ENCODE measurements at regions of chr2 and their contacts with region 1.

Region 1: GRCh38 chr2:234211797-234212196 is 161.3 kb downstream of the SPP2 start:
- DNase-seq: no peak
- CTCF ChIP-seq: no peak

Region 2: DNA sequence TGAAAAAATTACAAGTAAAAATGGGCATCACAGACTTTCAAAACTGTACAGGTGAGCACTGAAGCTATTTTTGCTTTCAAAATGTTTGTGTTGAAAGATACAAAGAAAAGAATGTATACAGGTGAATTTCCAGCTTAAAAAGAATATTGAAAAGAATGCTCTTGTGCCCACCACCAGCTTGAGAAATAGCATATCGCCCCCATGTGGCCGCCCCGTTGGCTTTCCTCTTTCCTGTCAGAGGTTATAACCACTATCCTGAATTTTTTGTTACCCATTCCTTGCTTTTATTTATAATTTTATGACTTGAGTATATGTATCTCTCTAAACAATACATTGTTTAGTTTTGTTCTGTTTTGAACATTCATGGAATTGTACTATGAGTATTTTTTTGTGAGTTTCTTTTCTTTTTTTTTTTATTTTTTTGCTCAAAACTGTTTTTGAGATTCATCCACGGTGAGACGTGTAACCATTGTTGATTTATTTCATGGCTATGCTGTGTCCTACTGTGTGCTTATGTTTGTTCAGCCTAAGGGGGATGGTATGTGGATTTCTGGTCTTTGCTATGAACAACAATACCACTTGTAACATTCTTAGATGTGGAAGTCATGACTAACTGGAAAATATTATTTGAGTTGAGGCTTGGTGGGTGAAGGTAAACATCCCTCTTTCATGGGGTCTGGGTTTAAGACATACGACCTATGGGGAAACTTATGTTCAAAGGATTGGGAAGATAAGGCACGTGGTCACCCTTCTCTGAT is 283.0 kb before region 1 on chr2:
- CTCF ChIA-PET with region 1: no interaction called
- POLR2A ChIA-PET with region 1: no interaction called
- DNase-seq: no peak
- CTCF ChIP-seq: peak; percentile 13

Region 3: GRCh38 chr2:234231460-234231859 is 19.7 kb after region 1 on chr2:
- CTCF ChIA-PET with region 1: interaction called, 11 read pairs
- POLR2A ChIA-PET with region 1: no interaction called
- DNase-seq: no peak
- CTCF ChIP-seq: no peak